ENCODE measurements at regions of chr7 and their contacts with region 1.

Region 1: DNA sequence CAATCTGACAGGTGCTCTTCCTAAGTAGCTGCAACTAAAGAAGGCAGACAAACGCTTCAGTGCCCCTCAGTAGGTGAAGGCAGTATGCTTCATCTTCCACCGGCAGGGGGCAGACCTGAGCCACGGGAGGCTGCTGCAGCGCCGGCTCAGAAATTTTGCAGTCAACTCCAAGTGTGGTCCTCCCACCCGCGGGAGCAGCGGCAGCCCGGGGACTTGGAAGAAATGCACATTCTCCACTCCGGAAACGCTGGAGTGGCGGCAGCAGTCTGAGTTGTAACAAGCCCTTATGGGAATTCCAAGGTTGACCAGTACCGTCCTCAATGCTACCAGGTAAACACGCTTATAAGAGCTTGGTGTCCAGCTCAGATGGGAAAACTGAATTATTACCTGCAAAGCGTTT is 3.4 kb downstream of the IGFBP3 start:
- DNase-seq: peak; percentile 69 to 78
- ATAC-seq: peak; percentile 33 to 62; a peak in 4 of 6 replicates
- H3K4me3 ChIP-seq: peak overlapping the region; percentile 66
- H3K27ac ChIP-seq: peak overlapping the region in 1 of 2 experiments; percentile 37; a peak in 3 of 6 replicates
- H3K4me1 ChIP-seq: peaks cover 36% of the 10 kb centered on the region
- CTCF ChIP-seq: peak; percentile 91
- EP300 ChIP-seq: no peak
- POLR2A ChIP-seq: no peak
- RAD21 ChIP-seq: peak; percentile 87 to 91

Region 2: DNA sequence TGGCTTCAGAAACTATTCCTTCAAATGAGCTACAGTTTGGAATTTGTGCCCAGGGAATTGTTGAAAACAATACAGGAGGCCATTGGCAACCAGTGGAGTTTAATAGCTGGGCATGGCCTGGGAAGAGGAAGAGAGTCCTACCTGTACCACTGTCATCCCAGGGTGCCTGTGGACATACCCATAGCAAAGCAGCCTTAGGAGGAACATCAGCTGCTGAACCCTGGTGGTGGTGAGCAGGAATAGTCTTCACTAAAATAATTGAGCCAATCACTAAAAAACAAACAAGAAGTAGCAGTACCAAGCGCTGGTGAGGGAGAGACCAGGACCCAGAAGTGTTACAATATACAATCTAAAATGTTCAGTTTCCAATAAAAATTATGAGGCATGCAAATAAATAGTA is 14.8 kb before region 1 on chr7:
- CTCF ChIA-PET with region 1: interaction called, 17 read pairs
- POLR2A ChIA-PET with region 1: no interaction called
- DNase-seq: no peak
- ATAC-seq: no peak; a peak in 1 of 6 replicates
- H3K4me3 ChIP-seq: no peak overlapping the region
- H3K27ac ChIP-seq: no peak overlapping the region
- H3K4me1 ChIP-seq: no peaks in the 10 kb centered on the region
- CTCF ChIP-seq: no peak
- EP300 ChIP-seq: no peak
- POLR2A ChIP-seq: no peak
- RAD21 ChIP-seq: no peak

Region 3: DNA sequence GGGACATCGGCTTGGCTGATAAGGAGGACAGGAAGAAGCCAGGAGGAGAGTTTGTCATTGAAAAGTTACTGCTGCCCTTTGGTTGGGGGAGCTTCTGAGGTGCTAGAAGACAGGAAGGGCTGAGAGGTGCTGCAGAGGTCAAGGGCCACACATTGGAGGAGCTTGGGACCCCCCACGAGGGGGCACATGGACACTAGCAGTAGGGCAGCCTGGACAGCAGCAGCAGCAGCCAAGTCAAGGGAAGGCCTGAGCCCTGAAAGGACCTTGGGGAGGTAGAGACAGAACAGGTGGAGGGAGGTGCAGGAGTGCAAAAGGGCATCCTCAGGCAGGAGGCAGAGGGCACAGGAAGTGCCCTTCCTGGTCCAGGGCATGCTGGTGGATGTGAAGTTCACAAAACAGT is 443.2 kb after region 1 on chr7:
- CTCF ChIA-PET with region 1: interaction called, 98 read pairs
- POLR2A ChIA-PET with region 1: no interaction called
- DNase-seq: no peak
- ATAC-seq: 0 out of 6 replicates have a peak, but pooled peaks of 1 of the 2 experiments have one; percentile 30
- H3K4me3 ChIP-seq: no peak overlapping the region
- H3K27ac ChIP-seq: peak overlapping the region in 1 of 2 experiments; percentile 45; a peak in 2 of 6 replicates
- H3K4me1 ChIP-seq: peaks cover 20% of the 10 kb centered on the region
- CTCF ChIP-seq: no peak
- EP300 ChIP-seq: no peak
- POLR2A ChIP-seq: no peak
- RAD21 ChIP-seq: peak; percentile 14 to 17; a peak in 2 of 5 replicates

Region 4: GRCh38 chr7:47179812-47180515 is 1262.3 kb after region 1 on chr7:
- CTCF ChIA-PET with region 1: interaction called, 242 read pairs
- POLR2A ChIA-PET with region 1: no interaction called
- DNase-seq: peak; percentile 55 to 66
- ATAC-seq: peak; percentile 89 to 96
- H3K4me3 ChIP-seq: no peak overlapping the region
- H3K27ac ChIP-seq: peak overlapping the region; percentile 32 to 72; a peak in 5 of 6 replicates
- H3K4me1 ChIP-seq: peaks cover 6% of the 10 kb centered on the region; the same call in 2 of the 3 replicates
- CTCF ChIP-seq: peak; percentile 96
- EP300 ChIP-seq: no peak
- POLR2A ChIP-seq: no peak
- RAD21 ChIP-seq: peak; percentile 96